Activated B cell treated with CpG ODN at 0.5 μM for 24 hours (primary cell): ENCODE measurements at regions of chr11 and their contacts with region 1.

Region 1: GRCh38 chr11:31509429-31510345 is at the starts of genes ELP4 and IMMP1L:
- DNase-seq: peak; percentile 84
- ATAC-seq: peak; percentile 99
- H3K4me3 Mint-ChIP-seq: peak within 1 kb of the TSS; percentile 98
- H3K27ac Mint-ChIP-seq: peak within 1 kb of the TSS; percentile 95
- H3K4me1 Mint-ChIP-seq: peaks cover 37% of the 10 kb centered on the region
- H3K27me3 Mint-ChIP-seq: no peaks in the 10 kb centered on the region
- CTCF ChIP-seq: no peak
- total RNA-seq, gene ELP4: 20.4 and 25.5 TPM in 2 replicates
- total RNA-seq, gene IMMP1L: 16.6 and 17.9 TPM in 2 replicates

Region 2: DNA sequence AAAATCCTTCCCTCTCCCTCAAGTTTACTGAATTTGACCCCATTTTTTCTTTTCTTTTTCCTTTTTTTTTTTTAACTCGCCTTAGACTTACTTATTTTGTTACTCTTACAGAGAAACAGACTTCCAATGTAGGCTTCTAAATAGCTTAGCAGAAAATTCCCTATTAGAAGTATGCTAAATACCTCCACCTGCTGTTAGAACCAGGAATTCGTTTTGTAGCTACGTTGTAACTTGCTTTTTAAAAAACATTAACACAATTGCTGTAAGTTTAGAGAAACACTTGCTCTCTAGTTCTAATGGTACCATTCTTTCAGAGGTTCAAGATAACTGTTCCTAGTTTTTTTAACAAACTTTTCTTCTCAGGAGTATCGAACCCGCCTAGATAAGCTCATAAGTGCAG is 464.4 kb before region 1 on chr11:
- CTCF ChIA-PET with region 1: no interaction called
- POLR2A ChIA-PET with region 1: no interaction called
- intact Hi-C with region 1: no loop called
- DNase-seq: no peak
- ATAC-seq: no peak
- H3K4me3 Mint-ChIP-seq: no peak overlapping the region
- H3K27ac Mint-ChIP-seq: no peak overlapping the region
- H3K4me1 Mint-ChIP-seq: no peaks in the 10 kb centered on the region
- H3K27me3 Mint-ChIP-seq: no peaks in the 10 kb centered on the region
- CTCF ChIP-seq: no peak

Region 3: DNA sequence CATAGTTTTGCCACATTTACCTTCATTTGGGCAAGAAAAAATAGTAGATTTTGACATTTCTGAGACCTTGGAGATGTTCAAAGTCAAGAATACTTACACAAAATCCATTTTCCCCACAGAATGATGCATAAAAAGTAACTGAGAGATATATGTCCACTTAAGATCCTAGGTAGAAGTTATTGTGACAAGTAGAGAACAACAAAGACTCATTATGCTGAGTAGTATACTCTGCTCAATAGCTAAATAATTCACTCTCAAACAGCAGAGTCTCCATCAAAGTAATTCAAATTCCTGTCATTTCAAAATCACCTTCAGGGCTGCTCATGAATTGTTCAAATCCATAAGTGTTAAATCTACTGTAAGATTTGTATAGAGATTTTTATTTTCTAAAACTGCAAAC is 35.6 kb before region 1 on chr11:
- CTCF ChIA-PET with region 1: no interaction called
- POLR2A ChIA-PET with region 1: no interaction called
- intact Hi-C with region 1: no loop called
- DNase-seq: no peak
- ATAC-seq: no peak
- H3K4me3 Mint-ChIP-seq: no peak overlapping the region
- H3K27ac Mint-ChIP-seq: no peak overlapping the region
- H3K4me1 Mint-ChIP-seq: no peaks in the 10 kb centered on the region
- H3K27me3 Mint-ChIP-seq: no peaks in the 10 kb centered on the region
- CTCF ChIP-seq: no peak

Region 4: DNA sequence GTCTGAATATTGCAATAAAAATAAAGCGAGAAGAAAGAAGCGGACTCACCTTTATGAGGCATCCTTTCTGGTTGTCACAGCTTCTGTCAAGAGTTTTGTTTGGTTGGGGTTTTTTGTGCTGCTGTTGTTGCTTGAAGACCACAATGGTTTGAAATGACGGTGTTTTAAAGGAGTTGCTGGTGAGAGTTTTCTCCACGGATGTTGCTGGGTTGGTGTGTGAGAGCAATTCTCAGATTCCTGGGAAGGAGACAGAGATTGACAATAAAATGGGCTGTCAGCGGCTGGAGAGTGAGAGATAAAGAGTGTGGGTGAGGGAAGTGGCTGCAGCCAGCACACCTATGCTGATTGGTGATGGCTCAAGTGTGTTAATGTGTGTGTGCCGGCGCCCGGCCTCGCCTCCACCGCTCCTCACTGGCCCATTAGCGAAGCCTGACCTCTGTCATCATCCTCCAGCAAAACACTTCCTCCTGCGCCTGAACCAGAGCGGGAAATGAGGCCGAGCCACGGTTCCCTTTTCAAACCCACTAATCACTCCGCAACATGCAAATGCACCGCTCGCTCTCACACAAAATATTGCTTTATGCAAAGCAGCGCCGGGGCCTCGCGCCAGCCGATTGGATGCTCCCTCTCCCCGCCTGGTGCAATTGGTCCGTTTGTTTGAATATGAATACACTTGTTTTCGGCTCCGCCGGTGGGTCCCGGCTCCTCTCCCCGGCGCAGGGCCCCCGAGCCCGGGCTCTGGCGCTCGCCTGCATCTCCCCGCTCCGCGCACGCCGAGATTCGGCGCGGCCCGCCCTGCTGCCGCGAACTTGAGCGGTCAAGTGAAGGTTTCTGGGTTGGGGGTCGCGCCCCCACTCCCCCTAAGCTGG is 301.3 kb after region 1 on chr11 and contains the start of gene PAX6:
- CTCF ChIA-PET with region 1: no interaction called
- POLR2A ChIA-PET with region 1: no interaction called
- intact Hi-C with region 1: loop called (anchors 2 kb)
- DNase-seq: no peak
- ATAC-seq: peak; percentile 66
- H3K4me3 Mint-ChIP-seq: peak within 1 kb of the TSS; percentile 74
- H3K27ac Mint-ChIP-seq: peak within 1 kb of the TSS; percentile 54
- H3K4me1 Mint-ChIP-seq: peaks cover 45% of the 10 kb centered on the region
- H3K27me3 Mint-ChIP-seq: peaks cover 67% of the 10 kb centered on the region
- CTCF ChIP-seq: no peak
- total RNA-seq, gene PAX6: not detected in 2 replicates

Region 5: DNA sequence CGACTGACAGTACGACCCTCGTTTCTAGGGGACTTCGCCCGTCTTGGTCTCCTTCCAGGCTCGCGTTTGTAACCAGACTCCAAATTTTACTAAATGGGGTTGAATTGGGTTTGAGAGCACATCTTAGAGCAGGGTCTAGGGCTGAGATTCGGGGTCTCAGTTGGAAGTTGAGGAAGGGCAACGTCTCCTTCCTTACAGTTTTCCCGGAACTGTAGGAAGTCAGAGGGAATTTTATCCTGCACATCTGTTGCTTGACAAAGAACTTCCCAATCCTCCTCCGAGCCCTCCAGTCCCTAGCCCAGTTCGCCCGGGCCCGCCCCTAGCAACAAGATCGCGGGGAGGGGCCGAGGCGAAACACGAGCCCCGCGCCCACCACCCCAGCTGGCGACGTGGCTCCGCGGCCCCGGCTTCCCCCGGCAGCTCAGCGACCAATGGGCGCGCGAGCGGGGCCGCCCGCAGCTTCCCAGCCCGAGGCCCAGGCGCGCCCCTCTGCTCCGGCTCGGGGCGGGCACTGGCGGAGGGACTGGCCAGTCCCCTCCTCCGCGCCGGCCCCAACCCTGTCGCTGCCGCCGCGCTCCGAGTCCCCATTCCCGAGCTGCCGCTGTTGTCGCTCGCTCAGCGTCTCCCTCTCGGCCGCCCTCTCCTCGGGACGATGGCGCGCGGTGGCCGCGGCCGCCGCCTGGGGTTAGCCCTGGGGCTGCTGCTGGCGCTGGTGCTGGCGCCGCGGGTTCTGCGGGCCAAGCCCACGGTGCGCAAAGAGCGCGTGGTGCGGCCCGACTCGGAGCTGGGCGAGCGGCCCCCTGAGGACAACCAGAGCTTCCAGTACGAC is 581.1 kb after region 1 on chr11 and contains the start of gene RCN1:
- CTCF ChIA-PET with region 1: no interaction called
- POLR2A ChIA-PET with region 1: no interaction called
- intact Hi-C with region 1: loop called (anchors 5 kb)
- DNase-seq: peak; percentile 50
- ATAC-seq: peak; percentile 66
- H3K4me3 Mint-ChIP-seq: peak within 1 kb of the TSS; percentile 86
- H3K27ac Mint-ChIP-seq: peak within 1 kb of the TSS; percentile 81
- H3K4me1 Mint-ChIP-seq: peaks cover 18% of the 10 kb centered on the region
- H3K27me3 Mint-ChIP-seq: peaks cover 9% of the 10 kb centered on the region
- CTCF ChIP-seq: no peak
- total RNA-seq, gene RCN1: 14.5 and 15.8 TPM in 2 replicates